ENCODE measurements at regions of chr18 and their contacts with region 1.

Region 1: GRCh38 chr18:22020127-22020866 is 149.1 kb upstream of the GATA6 start:
- DNase-seq: no peak
- H3K4me3 ChIP-seq: no peak overlapping the region
- H3K27ac ChIP-seq: no peak overlapping the region
- H3K4me1 ChIP-seq: no peaks in the 10 kb centered on the region
- CTCF ChIP-seq: no peak

Region 2: DNA sequence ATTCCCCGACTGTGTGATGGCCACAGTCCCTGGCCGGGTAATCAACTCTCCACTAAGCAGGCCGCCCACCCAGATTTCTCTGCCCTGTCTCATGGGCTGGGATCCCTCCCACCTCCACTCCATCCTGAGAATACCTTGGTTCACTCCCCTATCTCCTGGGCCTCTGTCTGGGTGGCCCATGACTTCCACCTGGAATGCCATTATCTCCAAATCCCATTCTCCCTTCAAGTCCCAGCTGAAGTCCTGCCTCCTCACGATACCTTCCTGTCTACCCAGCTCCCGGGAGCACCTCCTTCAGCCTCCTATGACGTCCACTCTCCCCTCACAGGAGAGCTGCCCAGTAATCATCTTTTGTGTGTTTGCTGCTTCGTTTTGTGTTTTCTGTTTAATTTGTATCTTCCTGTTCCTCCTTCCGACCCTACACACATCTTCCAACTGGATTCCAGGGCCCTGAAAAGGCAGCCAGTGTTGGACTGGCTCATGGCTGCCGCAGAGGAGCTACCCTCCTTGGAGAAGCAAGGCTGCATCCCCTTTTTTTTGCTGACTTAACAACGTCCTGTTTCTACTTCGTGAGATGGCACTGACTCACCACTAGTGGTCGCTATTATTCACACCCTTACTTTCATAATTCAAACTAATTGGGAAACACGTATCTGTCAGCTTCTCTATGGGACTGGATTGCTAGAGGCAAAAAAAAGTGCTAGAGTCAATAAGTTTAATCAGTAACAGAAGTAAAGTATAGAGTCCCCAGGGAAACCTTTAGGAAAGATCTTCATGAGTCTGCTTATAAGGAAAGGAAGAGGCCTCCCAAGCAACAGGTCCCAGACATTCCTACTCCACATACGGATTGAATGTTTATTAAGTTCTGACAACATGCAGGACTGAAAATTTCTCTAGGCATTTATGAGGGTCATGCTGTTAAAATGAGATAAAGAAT is 22.8 kb before region 1 on chr18:
- CTCF ChIA-PET with region 1: no interaction called
- POLR2A ChIA-PET with region 1: no interaction called
- intact Hi-C with region 1: no loop called
- DNase-seq: peak; percentile 49
- H3K4me3 ChIP-seq: no peak overlapping the region
- H3K27ac ChIP-seq: no peak overlapping the region
- H3K4me1 ChIP-seq: no peaks in the 10 kb centered on the region
- CTCF ChIP-seq: peak; percentile 97

Region 3: GRCh38 chr18:22074282-22075069 is 54.2 kb after region 1 on chr18:
- CTCF ChIA-PET with region 1: no interaction called
- POLR2A ChIA-PET with region 1: no interaction called
- intact Hi-C with region 1: loop called (anchors 10 kb)
- DNase-seq: no peak
- H3K4me3 ChIP-seq: no peak overlapping the region
- H3K27ac ChIP-seq: no peak overlapping the region
- H3K4me1 ChIP-seq: no peaks in the 10 kb centered on the region
- CTCF ChIP-seq: no peak